CD4-positive, alpha-beta memory T cell (primary cell): ENCODE measurements at regions of chr2 and their contacts with region 1.

Region 1: GRCh38 chr2:11863513-11864328 is 117.3 kb downstream of the LPIN1 start:
- DNase-seq: peak; percentile 59 to 67 (median 63)
- H3K4me3 ChIP-seq: peak overlapping the region in 1 of 2 donors; percentile 18
- H3K4me3 Mint-ChIP-seq: peak overlapping the region; percentile 54 to 87 (median 72)
- H3K27ac ChIP-seq: peak overlapping the region; percentile 3
- H3K27ac Mint-ChIP-seq: peak overlapping the region in 3 of 7 donors; percentile 26 to 50 (median 31)
- H3K4me1 ChIP-seq: peaks cover 25% of the 10 kb centered on the region
- H3K4me1 Mint-ChIP-seq: peaks cover 19 to 38% (median 23%) of the 10 kb centered on the region in 4 donors
- H3K27me3 ChIP-seq: no peaks in the 10 kb centered on the region
- H3K27me3 Mint-ChIP-seq: no peaks in the 10 kb centered on the region

Region 2: GRCh38 chr2:11829947-11830707 is 33.6 kb before region 1 on chr2:
- CTCF ChIA-PET with region 1: interaction called, 7 read pairs
- POLR2A ChIA-PET with region 1: no interaction called
- intact Hi-C with region 1: loop called (anchors 1 kb)
- DNase-seq: peak; percentile 62 to 76 (median 68)
- H3K4me3 ChIP-seq: peak overlapping the region; percentile 52 to 53
- H3K4me3 Mint-ChIP-seq: peak overlapping the region; percentile 83 to 92 (median 85)
- H3K27ac ChIP-seq: no peak overlapping the region
- H3K27ac Mint-ChIP-seq: peak overlapping the region; percentile 42 to 90 (median 82)
- H3K4me1 ChIP-seq: peaks cover 28% of the 10 kb centered on the region
- H3K4me1 Mint-ChIP-seq: peaks cover 23 to 45% (median 36%) of the 10 kb centered on the region in 4 donors
- H3K27me3 ChIP-seq: no peaks in the 10 kb centered on the region
- H3K27me3 Mint-ChIP-seq: no peaks in the 10 kb centered on the region

Region 3: DNA sequence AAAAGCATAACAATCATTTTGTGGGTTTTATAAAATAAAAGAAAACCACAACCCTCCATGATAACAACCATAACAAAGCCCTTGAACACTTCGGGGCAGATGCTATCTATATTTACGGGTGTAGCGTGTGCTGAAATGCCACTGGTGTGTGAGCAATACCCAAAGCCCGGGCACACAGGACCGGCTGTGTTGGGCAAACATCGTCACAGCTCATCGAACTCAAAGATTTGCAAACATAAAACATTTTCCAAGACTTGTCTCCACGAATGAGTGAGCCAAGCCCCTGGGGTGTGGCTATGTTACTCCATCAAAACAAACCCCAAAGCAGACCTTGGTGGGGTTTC is 172.9 kb after region 1 on chr2:
- CTCF ChIA-PET with region 1: no interaction called
- POLR2A ChIA-PET with region 1: no interaction called
- intact Hi-C with region 1: loop called (anchors 5 kb)
- DNase-seq: peak; percentile 29 to 58 (median 45)
- H3K4me3 ChIP-seq: no peak overlapping the region
- H3K4me3 Mint-ChIP-seq: peak overlapping the region in 6 of 8 donors; percentile 12 to 55 (median 32)
- H3K27ac ChIP-seq: no peak overlapping the region
- H3K27ac Mint-ChIP-seq: peak overlapping the region in 6 of 7 donors; percentile 5 to 79 (median 50)
- H3K4me1 ChIP-seq: peaks cover 26% of the 10 kb centered on the region
- H3K4me1 Mint-ChIP-seq: peaks cover 19 to 40% (median 27%) of the 10 kb centered on the region in 4 donors
- H3K27me3 ChIP-seq: no peaks in the 10 kb centered on the region
- H3K27me3 Mint-ChIP-seq: peaks cover 2 to 7% of the 10 kb centered on the region in 2 donors

Region 4: GRCh38 chr2:12176623-12177454 is 313.1 kb after region 1 on chr2:
- CTCF ChIA-PET with region 1: no interaction called
- POLR2A ChIA-PET with region 1: interaction called, 3 read pairs
- intact Hi-C with region 1: loop called (anchors 10 kb)
- DNase-seq: peak in 2 of 5 donors; percentile 7 to 21
- H3K4me3 ChIP-seq: peak overlapping the region in 1 of 2 donors; percentile 7
- H3K4me3 Mint-ChIP-seq: peak overlapping the region; percentile 16 to 79 (median 60)
- H3K27ac ChIP-seq: no peak overlapping the region
- H3K27ac Mint-ChIP-seq: peak overlapping the region in 6 of 7 donors; percentile 3 to 93 (median 76)
- H3K4me1 ChIP-seq: peaks cover 32% of the 10 kb centered on the region
- H3K4me1 Mint-ChIP-seq: peaks cover 24 to 47% (median 33%) of the 10 kb centered on the region in 4 donors
- H3K27me3 ChIP-seq: no peaks in the 10 kb centered on the region
- H3K27me3 Mint-ChIP-seq: no peaks in the 10 kb centered on the region

Region 5: DNA sequence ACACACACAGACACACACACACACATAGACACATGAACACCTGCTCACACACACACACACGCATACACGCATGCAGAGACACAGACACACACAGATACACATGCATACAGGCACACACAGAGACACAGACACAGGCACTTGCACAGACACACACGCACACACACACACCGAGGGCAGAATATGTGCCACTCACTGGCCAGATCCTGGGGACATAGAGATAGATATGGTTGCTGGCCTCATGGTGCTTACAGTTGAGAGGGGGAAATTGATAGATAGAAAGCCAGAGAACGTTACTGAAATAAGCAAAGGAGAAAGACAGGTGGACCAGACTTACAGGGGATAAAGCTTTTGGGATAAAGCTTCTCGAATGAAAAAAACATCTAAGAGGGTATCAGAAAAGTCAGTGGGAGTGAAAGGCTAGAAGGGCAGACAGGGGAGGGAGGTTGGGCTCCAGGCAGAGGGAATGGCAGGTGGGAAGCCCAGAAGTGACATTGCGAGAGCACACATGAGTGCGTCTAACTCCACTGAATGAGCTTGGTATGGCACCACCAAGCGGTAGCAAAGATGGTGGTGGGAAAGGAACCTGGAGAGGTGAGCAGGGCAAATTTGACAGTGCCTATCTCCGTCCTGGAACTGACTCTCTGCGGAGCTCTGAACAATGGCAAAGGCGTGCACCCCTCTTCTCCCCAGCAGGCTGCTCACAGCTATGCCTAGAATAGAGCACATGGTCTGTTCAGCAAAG is 462.9 kb after region 1 on chr2:
- CTCF ChIA-PET with region 1: interaction called, 3 read pairs
- POLR2A ChIA-PET with region 1: no interaction called
- intact Hi-C with region 1: loop called (anchors 1 kb)
- DNase-seq: no peak
- H3K4me3 ChIP-seq: no peak overlapping the region
- H3K4me3 Mint-ChIP-seq: no peak overlapping the region
- H3K27ac ChIP-seq: no peak overlapping the region
- H3K27ac Mint-ChIP-seq: no peak overlapping the region
- H3K4me1 ChIP-seq: no peaks in the 10 kb centered on the region
- H3K4me1 Mint-ChIP-seq: no peaks in the 10 kb centered on the region
- H3K27me3 ChIP-seq: no peaks in the 10 kb centered on the region
- H3K27me3 Mint-ChIP-seq: peaks cover 1 to 2% of the 10 kb centered on the region in 2 donors